ENCODE measurements at regions of chr16 and their contacts with region 1.

Region 1: DNA sequence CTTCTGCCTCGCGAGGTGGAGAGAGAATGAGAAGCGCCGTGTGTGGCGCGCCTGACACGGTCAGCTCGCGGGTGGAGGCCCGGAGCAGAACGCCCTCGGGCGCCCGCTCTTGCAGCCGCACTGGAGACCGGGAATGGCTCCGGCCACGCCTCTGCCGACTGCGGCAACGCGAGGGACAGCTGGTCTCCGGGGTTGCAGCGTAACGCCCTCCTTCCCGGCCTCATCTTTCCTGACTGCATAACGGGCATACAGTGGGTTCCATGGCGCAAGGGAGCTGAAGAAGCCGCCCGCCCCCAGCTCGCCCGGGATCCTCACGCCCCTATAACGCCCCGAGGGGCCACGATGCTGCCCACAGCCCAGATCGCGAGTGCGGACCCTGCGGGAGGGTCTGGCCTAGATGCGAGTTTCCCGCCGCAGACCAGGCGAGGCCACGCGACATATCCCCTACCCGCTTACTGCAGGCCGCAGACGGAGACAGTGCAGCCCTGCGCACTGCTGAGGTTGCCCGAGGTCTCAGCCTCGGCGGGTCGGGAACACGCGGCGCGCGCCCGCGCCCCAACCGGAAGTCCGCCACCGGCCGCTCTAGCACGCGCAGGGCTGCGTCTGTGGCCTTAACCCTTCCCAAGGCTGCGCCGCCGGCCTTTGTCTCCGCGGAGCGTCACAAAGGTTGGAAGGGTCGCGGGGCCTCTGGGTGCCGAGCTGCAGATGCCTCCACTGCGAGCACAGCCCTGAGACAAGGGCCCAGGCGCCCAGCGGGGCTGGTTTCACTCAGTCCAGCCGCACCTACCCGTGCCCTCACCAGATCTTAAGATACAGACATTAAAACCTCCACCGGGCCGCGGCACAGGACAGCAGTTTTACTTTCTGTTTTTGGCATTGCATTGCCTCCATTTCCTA is 18.8 kb downstream of the BCL7C start:
- DNase-seq: peak; percentile 93
- H3K4me3 ChIP-seq: peak overlapping the region; percentile 75 to 94
- H3K27ac ChIP-seq: peak overlapping the region; percentile 83 to 92
- H3K4me1 ChIP-seq: peaks cover 6 to 7% of the 10 kb centered on the region in 2 experiments; a peak in 2 of 4 replicates
- H3K27me3 ChIP-seq: no peaks in the 10 kb centered on the region
- CTCF ChIP-seq: no peak
- EP300 ChIP-seq: no peak; a peak in 1 of 4 replicates
- RAD21 ChIP-seq: no peak

Region 2: DNA sequence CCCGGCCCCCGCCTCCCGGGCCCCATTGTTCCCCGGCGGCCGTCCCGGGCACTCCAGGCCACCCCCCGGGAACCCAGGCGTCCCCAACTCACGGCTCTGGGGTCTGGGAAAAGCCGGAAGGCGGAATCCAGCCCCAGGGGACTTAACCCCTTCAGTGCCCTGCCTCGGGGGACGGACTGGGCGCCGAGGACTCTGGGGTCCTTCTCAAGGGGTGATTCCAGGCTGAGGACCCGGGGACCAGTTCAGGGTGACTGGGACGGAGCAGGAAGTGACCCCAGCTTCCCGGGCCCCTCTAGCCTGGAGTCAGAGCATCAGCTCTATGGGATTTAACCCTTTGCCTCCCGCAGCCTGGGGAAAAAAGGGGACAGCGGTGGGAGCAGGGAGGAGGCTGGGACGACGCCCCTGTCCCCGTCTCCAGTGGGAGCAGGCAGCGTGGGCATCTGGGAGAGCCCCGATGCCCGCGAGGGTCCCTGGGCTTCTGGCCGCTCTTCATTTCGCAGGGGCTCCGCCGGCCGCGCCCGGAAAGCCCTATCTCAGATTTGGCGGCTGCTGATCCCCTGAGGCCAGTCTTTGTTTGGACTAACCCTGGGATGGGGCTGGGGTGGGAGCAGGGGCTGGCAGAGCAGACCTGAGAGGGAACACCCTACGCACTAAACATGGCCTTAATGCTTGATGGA is 88.0 kb before region 1 on chr16 and contains the start of gene ZNF629:
- CTCF ChIA-PET with region 1: interaction called, 3 read pairs
- POLR2A ChIA-PET with region 1: interaction called, 12 read pairs
- DNase-seq: peak; percentile 97
- H3K4me3 ChIP-seq: peak within 1 kb of the TSS; percentile 82 to 86
- H3K27ac ChIP-seq: peak within 1 kb of the TSS; percentile 63 to 92
- H3K4me1 ChIP-seq: peaks cover 6 to 17% of the 10 kb centered on the region in 2 experiments; a peak in 2 of 4 replicates
- H3K27me3 ChIP-seq: no peaks in the 10 kb centered on the region
- CTCF ChIP-seq: no peak
- EP300 ChIP-seq: no peak
- RAD21 ChIP-seq: no peak
- polyA plus RNA-seq, gene ZNF629: 4.7 and 5.1 TPM in 2 replicates

Region 3: GRCh38 chr16:30829130-30830071 is 45.7 kb before region 1 on chr16:
- CTCF ChIA-PET with region 1: no interaction called
- POLR2A ChIA-PET with region 1: no interaction called
- DNase-seq: no peak
- H3K4me3 ChIP-seq: no peak overlapping the region
- H3K27ac ChIP-seq: no peak overlapping the region
- H3K4me1 ChIP-seq: no peaks in the 10 kb centered on the region
- H3K27me3 ChIP-seq: no peaks in the 10 kb centered on the region
- CTCF ChIP-seq: no peak
- EP300 ChIP-seq: no peak
- RAD21 ChIP-seq: no peak

Region 4: GRCh38 chr16:30902029-30902972 is 27.2 kb after region 1 on chr16:
- CTCF ChIA-PET with region 1: interaction called, 10 read pairs
- POLR2A ChIA-PET with region 1: interaction called, 3 read pairs
- DNase-seq: peak; percentile 94
- H3K4me3 ChIP-seq: peak overlapping the region; percentile 36 to 38
- H3K27ac ChIP-seq: peak overlapping the region; percentile 30 to 44; a peak in 3 of 4 replicates
- H3K4me1 ChIP-seq: peaks cover 5 to 14% of the 10 kb centered on the region in 2 experiments; a peak in 2 of 4 replicates
- H3K27me3 ChIP-seq: no peaks in the 10 kb centered on the region
- CTCF ChIP-seq: no peak
- EP300 ChIP-seq: no peak
- RAD21 ChIP-seq: peak; percentile 30; the same call in 1 of the 2 replicates

Region 5: DNA sequence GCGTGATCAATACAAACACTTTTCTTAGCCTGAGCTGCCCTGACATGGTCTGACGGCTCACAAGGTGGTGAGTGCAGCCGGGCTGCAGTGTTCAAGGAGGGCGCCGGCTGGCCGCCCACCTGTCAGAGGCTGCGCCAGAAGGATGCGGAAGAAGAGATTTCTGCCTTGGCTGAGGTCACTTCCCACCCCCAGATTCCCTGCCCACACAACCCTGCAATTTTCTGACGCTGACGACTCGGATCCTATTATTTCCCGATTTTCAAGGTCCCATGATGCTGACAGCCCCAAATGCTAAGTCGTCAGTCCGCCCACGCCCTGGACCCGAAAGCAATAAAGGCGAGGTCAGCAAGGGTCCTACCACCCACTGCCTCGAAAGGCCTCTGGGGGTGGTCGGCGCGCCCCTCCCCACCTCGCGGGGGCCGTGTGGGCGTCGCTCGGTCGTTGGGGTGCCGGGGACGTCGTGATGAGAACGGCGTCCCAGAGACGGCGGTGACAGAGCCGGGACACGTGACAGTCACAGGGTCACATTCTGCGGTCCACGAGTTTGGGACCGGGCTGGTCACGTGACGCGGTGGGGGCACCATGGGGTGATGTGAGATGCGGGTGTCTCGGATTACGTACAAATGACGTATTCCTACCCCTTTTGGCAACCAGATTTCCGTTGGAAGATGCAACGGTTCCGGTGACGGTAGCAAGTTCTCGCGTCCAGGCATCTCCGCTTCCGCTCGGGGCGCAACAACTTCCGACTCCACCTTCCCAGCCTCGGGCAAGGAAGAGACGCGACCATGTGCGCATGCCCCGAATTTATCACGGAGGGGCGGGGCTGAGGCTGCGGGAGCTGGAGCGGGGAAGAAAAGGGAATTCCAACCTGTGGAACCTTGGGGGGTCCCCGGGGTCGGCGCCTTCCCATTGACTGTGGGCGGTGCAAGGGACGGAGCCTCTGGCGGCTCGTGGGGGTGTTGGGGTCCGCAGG is 158.0 kb after region 1 on chr16 and contains the start of gene STX4:
- CTCF ChIA-PET with region 1: no interaction called
- POLR2A ChIA-PET with region 1: no interaction called
- DNase-seq: peak; percentile 94
- H3K4me3 ChIP-seq: peak within 1 kb of the TSS; percentile 87 to 97
- H3K27ac ChIP-seq: peak within 1 kb of the TSS; percentile 64
- H3K4me1 ChIP-seq: peaks cover 9 to 10% of the 10 kb centered on the region in 2 experiments; a peak in 2 of 4 replicates
- H3K27me3 ChIP-seq: no peaks in the 10 kb centered on the region
- CTCF ChIP-seq: no peak
- EP300 ChIP-seq: no peak
- RAD21 ChIP-seq: no peak
- polyA plus RNA-seq, gene STX4: 117 TPM in 2 replicates